ENCODE measurements at regions of chr12 and their contacts with region 1.

Region 1: DNA sequence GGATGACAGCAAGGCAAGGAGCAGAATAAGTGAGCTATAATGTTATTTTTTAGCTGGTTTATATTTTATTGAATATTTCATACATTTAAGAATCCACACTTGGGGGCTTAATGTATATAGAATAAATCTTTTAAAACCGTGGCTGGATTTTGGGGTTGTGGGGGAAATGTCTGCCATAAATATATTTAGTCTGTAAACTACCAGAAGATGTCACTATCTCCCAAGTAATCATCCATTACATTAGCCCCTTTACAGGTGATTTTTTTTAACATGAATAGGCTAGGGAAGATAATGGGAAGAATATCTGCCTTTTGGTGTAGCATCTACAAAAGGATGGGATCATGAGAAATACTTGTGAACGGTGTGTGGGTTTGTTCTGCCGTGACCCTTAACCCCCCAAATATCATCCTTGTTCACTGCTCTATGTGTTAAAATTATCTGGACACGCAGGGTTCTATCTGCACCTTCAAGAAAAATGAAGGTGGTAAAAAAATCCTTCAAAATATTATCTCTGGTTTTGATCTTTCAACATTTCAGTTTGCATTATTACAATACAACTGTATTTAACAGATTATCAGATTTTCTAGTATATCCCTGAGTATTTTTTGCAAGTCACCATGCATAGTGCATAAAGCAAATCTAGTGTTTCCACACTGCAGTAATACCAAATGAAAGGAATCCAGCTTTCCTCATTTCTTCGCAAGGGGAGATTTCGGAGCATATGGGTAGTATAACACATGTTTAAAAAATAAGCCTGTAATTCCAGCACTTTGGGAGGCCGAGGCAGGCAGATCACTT is 8.0 kb upstream of the SLC17A8 start:
- DNase-seq: no peak
- H3K4me3 ChIP-seq: no peak overlapping the region
- CTCF ChIP-seq: no peak

Region 2: DNA sequence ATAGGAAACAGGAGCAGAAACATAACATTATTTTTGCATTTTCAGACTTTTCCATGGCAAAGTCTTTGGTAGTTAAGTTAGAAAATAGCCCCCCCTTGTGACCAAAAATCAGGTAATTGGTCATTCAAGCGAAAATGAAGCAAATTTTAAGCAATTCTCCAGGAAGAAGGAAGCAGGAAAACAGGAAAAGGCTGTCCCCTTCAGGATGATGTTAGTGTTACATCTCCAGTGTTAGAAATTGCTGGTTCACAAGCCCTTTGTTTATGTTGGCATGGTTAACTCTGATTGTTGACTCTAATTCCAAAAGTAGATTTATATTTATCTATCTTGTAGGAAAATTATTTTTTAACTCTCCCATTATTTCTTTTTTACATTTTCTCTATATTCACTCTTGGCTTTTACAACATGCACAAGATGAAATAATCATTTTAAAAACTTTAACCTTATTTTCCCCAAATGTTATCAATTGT is 205.8 kb after region 1 on chr12:
- CTCF ChIA-PET with region 1: interaction called, 85 read pairs
- POLR2A ChIA-PET with region 1: no interaction called
- DNase-seq: peak; percentile 63
- H3K4me3 ChIP-seq: no peak overlapping the region
- CTCF ChIP-seq: peak; percentile 73

Region 3: DNA sequence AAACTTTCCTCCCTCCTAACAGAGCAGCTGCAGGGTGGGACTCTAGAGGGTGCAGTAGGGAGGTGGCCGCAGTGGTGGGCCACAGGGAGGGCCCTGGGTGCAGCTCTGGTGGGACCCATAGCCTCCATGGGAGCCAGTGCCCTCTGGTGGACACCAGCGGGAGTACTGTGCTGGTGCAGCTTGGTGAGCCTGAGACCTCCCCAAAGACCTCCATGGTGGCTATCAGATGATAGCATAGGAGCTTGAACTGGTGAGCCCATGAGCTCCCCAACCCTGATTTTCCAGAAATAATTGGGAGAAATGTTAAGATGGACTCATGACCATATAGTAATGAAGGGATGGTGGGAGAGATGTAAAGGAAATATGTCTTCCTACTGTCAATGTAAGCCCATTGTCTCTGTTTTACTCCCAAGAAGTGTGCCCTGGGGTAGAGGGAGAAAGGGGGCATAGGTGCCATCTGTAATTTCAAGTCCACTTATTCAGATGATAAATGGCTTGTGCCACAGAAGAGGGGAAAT is 323.3 kb after region 1 on chr12:
- CTCF ChIA-PET with region 1: interaction called, 16 read pairs
- POLR2A ChIA-PET with region 1: no interaction called
- DNase-seq: no peak
- H3K4me3 ChIP-seq: no peak overlapping the region
- CTCF ChIP-seq: peak; percentile 56

Region 4: GRCh38 chr12:100733817-100734593 is 385.1 kb after region 1 on chr12:
- CTCF ChIA-PET with region 1: interaction called, 26 read pairs
- POLR2A ChIA-PET with region 1: no interaction called
- DNase-seq: no peak
- H3K4me3 ChIP-seq: no peak overlapping the region
- CTCF ChIP-seq: peak; percentile 49